ENCODE measurements at regions of chr6 and their contacts with region 1.

Region 1: DNA sequence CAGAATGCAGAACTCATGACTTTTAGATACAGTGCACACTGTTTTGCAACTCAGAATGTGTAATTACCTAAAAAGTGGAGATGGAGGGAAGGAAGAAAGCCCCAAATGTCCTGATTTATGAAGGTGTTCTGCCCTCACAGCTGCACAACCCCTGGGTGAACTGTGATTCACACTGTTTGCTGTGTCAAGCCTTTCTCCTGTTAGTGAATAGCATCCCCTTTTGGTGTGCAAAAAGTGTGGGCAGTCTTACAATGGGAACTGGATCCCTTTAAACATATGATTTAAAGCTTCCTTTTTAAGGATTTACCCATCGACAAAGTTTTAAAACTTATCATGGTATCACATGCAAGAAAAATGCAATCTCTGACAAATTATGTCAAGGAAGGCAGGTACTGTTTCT is 633.4 kb upstream of the EPHA7 start:
- DNase-seq: peak; percentile 10
- ATAC-seq: 0 out of 2 replicates have a peak, but pooled peaks have one; percentile 58
- H3K4me3 ChIP-seq: no peak overlapping the region
- H3K27ac ChIP-seq: no peak overlapping the region; the same call in 1 of the 2 replicates
- H3K4me1 ChIP-seq: no peaks in the 10 kb centered on the region
- H3K27me3 ChIP-seq: no peaks in the 10 kb centered on the region
- CTCF ChIP-seq: peak; percentile 83

Region 2: DNA sequence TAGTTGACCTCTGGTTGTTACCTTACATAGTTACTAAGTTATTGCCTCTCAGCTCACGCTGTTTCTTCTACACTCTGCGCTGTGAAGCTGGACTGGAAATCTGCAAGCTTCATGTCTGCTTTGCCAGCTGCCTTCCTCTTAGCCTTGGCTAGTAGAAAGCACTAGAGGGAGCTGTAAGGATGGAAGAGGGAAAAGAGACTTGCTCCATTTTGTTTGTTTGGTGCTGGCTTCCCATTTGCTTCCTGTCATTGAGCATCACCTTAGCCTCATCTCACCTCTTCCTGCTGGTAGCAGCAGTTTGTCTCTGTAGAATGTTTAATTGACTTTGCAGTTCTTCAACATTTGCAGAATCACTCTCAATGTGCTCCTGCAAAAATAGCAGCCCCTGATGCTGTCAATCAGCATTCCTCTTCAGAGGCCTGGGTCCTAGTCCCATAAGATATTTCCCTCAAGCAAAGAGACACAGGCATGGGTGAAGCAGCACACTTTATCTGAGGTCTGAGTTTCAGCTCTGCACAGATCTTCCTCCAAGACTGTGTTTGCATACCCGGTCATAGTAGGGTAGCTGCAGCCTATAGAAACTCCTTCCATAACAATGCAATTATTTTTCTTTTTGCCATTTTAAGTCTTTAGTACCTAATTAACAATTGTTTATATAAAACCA is 331.2 kb before region 1 on chr6:
- CTCF ChIA-PET with region 1: interaction called, 3 read pairs
- POLR2A ChIA-PET with region 1: no interaction called
- in situ Hi-C with region 1: no loop called
- intact Hi-C with region 1: loop called (anchors 10 kb)
- DNase-seq: peak; percentile 27
- ATAC-seq: peak; percentile 82
- H3K4me3 ChIP-seq: no peak overlapping the region
- H3K27ac ChIP-seq: peak overlapping the region; percentile 63; the same call in 1 of the 2 replicates
- H3K4me1 ChIP-seq: no peaks in the 10 kb centered on the region; the same call in 1 of the 2 replicates
- H3K27me3 ChIP-seq: no peaks in the 10 kb centered on the region
- CTCF ChIP-seq: peak; percentile 79

Region 3: GRCh38 chr6:93746892-93747291 is 305.9 kb before region 1 on chr6:
- CTCF ChIA-PET with region 1: interaction called, 10 read pairs
- POLR2A ChIA-PET with region 1: no interaction called
- in situ Hi-C with region 1: no loop called
- intact Hi-C with region 1: no loop called
- DNase-seq: no peak
- ATAC-seq: no peak
- H3K4me3 ChIP-seq: no peak overlapping the region
- H3K27ac ChIP-seq: no peak overlapping the region
- H3K4me1 ChIP-seq: no peaks in the 10 kb centered on the region
- H3K27me3 ChIP-seq: no peaks in the 10 kb centered on the region
- CTCF ChIP-seq: no peak